PC-9 (cell line): ENCODE measurements at regions of chr2 and their contacts with region 1.

Region 1: DNA sequence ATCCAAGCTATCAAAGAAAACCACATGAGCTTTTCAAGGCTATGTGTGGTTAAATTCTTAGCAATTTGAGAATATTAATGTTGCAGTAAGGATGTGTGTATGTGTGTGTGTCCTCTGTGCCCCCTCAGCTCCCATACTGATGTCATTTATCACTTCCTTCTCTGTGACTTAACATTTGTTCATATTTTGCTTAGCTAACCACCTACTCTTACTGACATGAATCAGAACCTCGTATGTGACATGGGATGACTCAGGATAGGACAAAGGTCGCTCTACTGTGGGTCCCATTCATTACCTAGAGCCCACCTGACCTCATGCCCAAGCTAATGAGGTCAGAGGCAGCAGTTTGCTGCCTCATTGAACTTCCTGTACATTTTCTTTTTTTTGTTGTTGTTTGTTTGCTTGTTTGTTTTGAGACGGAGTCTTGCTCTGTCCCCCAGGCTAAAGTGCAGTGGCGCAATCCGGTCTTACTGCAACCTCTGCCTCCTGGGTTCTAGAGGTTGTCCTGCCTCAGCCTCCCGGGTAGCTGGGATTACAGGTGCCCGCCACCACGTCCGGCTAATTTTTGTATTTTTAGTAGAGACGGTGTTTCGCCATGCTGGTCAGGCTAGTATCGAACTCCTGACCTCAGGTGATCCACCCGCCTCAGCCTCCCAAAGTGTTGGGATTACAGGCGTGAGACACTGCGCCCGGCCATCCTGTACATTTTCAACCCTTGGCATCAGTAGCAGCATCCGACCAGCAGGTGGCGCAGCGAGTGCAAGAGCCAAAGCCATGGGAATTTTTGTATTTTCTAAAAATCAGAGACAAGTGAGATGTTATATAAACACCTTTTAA is 36.4 kb downstream of the MOGAT1 start:
- DNase-seq: peak; percentile 80 to 90
- H3K4me3 ChIP-seq: no peak overlapping the region
- H3K27ac ChIP-seq: peak overlapping the region; percentile 20
- H3K4me1 ChIP-seq: peaks cover 13% of the 10 kb centered on the region; the same call in 1 of the 2 replicates
- H3K27me3 ChIP-seq: no peaks in the 10 kb centered on the region
- CTCF ChIP-seq: peak; percentile 100

Region 2: GRCh38 chr2:222753251-222753824 is 45.4 kb after region 1 on chr2:
- CTCF ChIA-PET with region 1: interaction called, 4 read pairs
- POLR2A ChIA-PET with region 1: no interaction called
- intact Hi-C with region 1: loop called (anchors 1 kb)
- DNase-seq: no peak
- H3K4me3 ChIP-seq: no peak overlapping the region
- H3K27ac ChIP-seq: no peak overlapping the region
- H3K4me1 ChIP-seq: peaks cover 28% of the 10 kb centered on the region
- H3K27me3 ChIP-seq: no peaks in the 10 kb centered on the region
- CTCF ChIP-seq: no peak

Region 3: GRCh38 chr2:222792001-222792611 is 84.2 kb after region 1 on chr2:
- CTCF ChIA-PET with region 1: interaction called, 9 read pairs
- POLR2A ChIA-PET with region 1: interaction called, 5 read pairs
- intact Hi-C with region 1: loop called (anchors 1 kb)
- DNase-seq: no peak
- H3K4me3 ChIP-seq: no peak overlapping the region
- H3K27ac ChIP-seq: no peak overlapping the region
- H3K4me1 ChIP-seq: peaks cover 29% of the 10 kb centered on the region
- H3K27me3 ChIP-seq: no peaks in the 10 kb centered on the region
- CTCF ChIP-seq: no peak

Region 4: GRCh38 chr2:222837511-222838056 is 129.7 kb after region 1 on chr2:
- CTCF ChIA-PET with region 1: interaction called, 10 read pairs
- POLR2A ChIA-PET with region 1: interaction called, 6 read pairs
- intact Hi-C with region 1: loop called (anchors 1 kb)
- DNase-seq: peak; percentile 75 to 100
- H3K4me3 ChIP-seq: peak overlapping the region; percentile 31; the same call in 1 of the 2 replicates
- H3K27ac ChIP-seq: peak overlapping the region; percentile 82
- H3K4me1 ChIP-seq: peaks cover 83% of the 10 kb centered on the region
- H3K27me3 ChIP-seq: no peaks in the 10 kb centered on the region
- CTCF ChIP-seq: no peak

Region 5: GRCh38 chr2:222860740-222861410 is 153.0 kb after region 1 on chr2 and contains the start of gene ACSL3:
- CTCF ChIA-PET with region 1: interaction called, 7 read pairs
- POLR2A ChIA-PET with region 1: interaction called, 13 read pairs
- intact Hi-C with region 1: loop called (anchors 1 kb)
- DNase-seq: peak; percentile 94 to 100
- H3K4me3 ChIP-seq: peak within 1 kb of the TSS; percentile 83
- H3K27ac ChIP-seq: peak within 1 kb of the TSS; percentile 90
- H3K4me1 ChIP-seq: peaks cover 66% of the 10 kb centered on the region
- H3K27me3 ChIP-seq: no peaks in the 10 kb centered on the region
- CTCF ChIP-seq: no peak; the same call in 1 of the 2 replicates
- total RNA-seq, gene ACSL3: 300 and 446 TPM in 2 replicates

Region 6: GRCh38 chr2:222903234-222904220 is 195.6 kb after region 1 on chr2:
- CTCF ChIA-PET with region 1: interaction called, 21 read pairs
- POLR2A ChIA-PET with region 1: interaction called, 6 read pairs
- intact Hi-C with region 1: loop called (anchors 1 kb)
- DNase-seq: peak; percentile 48 to 68
- H3K4me3 ChIP-seq: no peak overlapping the region
- H3K27ac ChIP-seq: 0 out of 2 replicates have a peak overlapping the region, but pooled peaks have one; percentile 7
- H3K4me1 ChIP-seq: peaks cover 29% of the 10 kb centered on the region
- H3K27me3 ChIP-seq: no peaks in the 10 kb centered on the region
- CTCF ChIP-seq: peak; percentile 99

Region 7: DNA sequence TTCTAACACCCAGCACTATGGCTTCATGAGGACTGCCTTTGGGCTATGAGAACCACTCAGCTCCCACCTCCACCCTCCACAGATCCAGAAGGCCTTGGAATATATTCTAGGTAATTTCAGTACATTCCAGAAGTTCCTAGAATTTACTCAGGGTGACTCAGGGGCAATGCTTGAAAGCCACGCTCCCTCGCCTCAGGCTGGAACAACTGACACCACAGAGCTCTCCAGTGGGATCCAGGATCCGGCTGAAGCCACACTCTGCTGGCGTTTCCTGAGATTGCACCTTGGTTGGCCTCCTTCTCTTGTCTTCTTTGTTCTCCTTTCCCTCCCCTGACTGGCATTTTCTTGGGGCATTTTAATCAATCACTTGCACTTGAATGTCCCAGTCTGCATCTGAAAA is 251.4 kb after region 1 on chr2:
- CTCF ChIA-PET with region 1: no interaction called
- POLR2A ChIA-PET with region 1: no interaction called
- intact Hi-C with region 1: loop called (anchors 1 kb)
- DNase-seq: peak; percentile 96 to 98
- H3K4me3 ChIP-seq: no peak overlapping the region
- H3K27ac ChIP-seq: peak overlapping the region; percentile 55
- H3K4me1 ChIP-seq: peaks cover 18% of the 10 kb centered on the region
- H3K27me3 ChIP-seq: no peaks in the 10 kb centered on the region
- CTCF ChIP-seq: peak; percentile 79

Region 8: DNA sequence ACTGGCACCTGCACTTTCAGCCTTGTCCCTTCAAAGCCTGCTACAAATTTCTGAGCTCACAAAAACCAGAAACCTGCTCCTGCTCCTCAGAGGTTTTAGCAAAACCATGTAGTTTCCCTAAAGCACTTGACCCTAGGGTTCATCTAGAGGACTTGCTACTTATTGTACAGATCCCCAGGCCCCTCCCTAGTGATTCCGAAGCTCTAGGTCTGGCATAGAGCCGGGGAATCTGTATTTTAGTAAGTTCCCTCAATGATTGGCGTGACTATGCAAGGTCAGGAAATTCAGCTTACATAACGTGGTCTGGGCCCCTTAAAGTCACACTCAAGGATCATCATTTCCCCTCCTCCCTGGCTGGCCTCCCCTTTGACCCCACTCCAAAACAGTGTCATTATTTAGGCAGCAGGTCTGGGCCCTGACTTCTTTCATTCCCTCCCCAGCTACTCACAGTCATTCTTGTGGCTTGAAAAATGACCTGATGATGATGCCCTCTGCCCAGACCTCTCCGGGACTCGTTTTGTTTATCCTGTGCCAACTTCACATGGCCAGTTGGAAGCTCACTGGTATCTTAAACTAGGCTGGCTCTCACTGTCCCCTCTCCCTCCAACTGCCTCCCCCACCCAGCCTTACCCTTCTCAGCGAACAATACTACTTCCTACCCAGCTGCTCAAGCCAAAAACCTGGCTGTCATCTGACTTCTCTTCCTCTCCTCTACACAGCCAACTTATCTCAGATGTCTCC is 1201.3 kb after region 1 on chr2:
- CTCF ChIA-PET with region 1: no interaction called
- POLR2A ChIA-PET with region 1: no interaction called
- intact Hi-C with region 1: no loop called
- DNase-seq: no peak
- H3K4me3 ChIP-seq: no peak overlapping the region
- H3K27ac ChIP-seq: no peak overlapping the region
- H3K4me1 ChIP-seq: no peaks in the 10 kb centered on the region
- H3K27me3 ChIP-seq: no peaks in the 10 kb centered on the region
- CTCF ChIP-seq: no peak